OCI-LY7 (cell line): ENCODE measurements at regions of chr6 and their contacts with region 1.

Region 1: DNA sequence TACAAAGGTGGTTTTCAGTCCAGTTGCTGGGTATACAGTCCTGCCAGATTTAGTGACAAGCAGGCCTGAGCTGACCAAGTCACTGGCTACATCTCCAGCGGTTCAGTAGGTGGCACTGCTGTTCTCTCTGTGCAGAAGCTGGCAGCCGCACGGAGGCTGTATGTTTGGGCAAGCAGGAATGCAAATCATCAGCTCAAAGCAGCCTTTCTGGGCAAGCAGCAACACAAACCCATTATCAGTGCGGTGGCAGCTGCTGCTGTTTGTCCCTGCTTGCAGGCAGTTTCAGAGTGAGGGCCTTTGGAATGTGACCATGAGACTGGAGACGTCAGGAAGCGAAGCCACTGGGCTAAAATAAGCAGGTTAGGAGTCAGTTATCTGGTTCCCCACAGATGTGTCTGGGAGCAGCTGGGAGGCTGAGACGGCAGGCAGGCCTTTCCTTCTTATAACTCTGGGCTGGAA is 72.5 kb downstream of the TXLNB start:
- DNase-seq: peak; percentile 96
- H3K4me3 ChIP-seq: peak overlapping the region; percentile 60
- H3K27ac ChIP-seq: peak overlapping the region; percentile 63
- H3K4me1 ChIP-seq: peaks cover 26% of the 10 kb centered on the region
- CTCF ChIP-seq: peak; percentile 98

Region 2: DNA sequence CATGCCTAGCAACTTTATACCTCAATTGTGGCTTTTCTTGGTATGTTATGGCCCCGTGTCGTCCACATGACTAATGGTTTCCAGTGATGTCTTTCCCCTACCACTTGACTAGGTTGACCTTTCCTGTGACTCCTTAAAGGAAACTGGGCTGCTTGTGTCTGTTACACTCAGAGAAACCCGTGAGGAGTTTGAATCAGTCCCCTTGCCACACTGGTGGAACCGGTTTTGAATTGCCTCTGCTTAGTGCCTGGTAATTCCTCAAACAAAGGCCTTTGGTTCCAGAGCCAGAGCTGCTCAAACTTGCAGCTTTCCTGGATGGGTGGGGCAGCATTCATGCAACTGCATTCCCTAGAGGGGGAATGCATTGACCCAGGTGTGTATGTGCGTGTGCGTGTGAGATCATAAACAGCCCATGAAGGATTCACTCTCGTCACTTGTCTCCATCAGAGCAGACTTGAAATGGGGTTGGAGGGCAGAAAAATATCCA is 401.4 kb before region 1 on chr6:
- CTCF ChIA-PET with region 1: no interaction called
- POLR2A ChIA-PET with region 1: no interaction called
- intact Hi-C with region 1: loop called (anchors 2 kb)
- DNase-seq: no peak
- H3K4me3 ChIP-seq: no peak overlapping the region
- H3K27ac ChIP-seq: no peak overlapping the region
- H3K4me1 ChIP-seq: peaks cover 15% of the 10 kb centered on the region
- CTCF ChIP-seq: no peak

Region 3: GRCh38 chr6:139060332-139060731 is 159.0 kb before region 1 on chr6:
- CTCF ChIA-PET with region 1: no interaction called
- POLR2A ChIA-PET with region 1: no interaction called
- intact Hi-C with region 1: no loop called
- DNase-seq: no peak
- H3K4me3 ChIP-seq: no peak overlapping the region
- H3K27ac ChIP-seq: no peak overlapping the region
- H3K4me1 ChIP-seq: no peaks in the 10 kb centered on the region
- CTCF ChIP-seq: no peak

Region 4: GRCh38 chr6:139124887-139125672 is 94.2 kb before region 1 on chr6:
- CTCF ChIA-PET with region 1: interaction called, 5 read pairs
- POLR2A ChIA-PET with region 1: interaction called, 3 read pairs
- intact Hi-C with region 1: loop called (anchors 1 kb)
- DNase-seq: peak; percentile 92
- H3K4me3 ChIP-seq: peak overlapping the region; percentile 19
- H3K27ac ChIP-seq: peak overlapping the region; percentile 21
- H3K4me1 ChIP-seq: peaks cover 21% of the 10 kb centered on the region
- CTCF ChIP-seq: peak; percentile 98

Region 5: GRCh38 chr6:139230391-139230840 is 11.1 kb after region 1 on chr6:
- CTCF ChIA-PET with region 1: interaction called, 10 read pairs
- POLR2A ChIA-PET with region 1: interaction called, 7 read pairs
- intact Hi-C with region 1: no loop called
- DNase-seq: peak; percentile 77
- H3K4me3 ChIP-seq: no peak overlapping the region
- H3K27ac ChIP-seq: peak overlapping the region; percentile 47
- H3K4me1 ChIP-seq: peaks cover 26% of the 10 kb centered on the region
- CTCF ChIP-seq: peak; percentile 74

Region 6: GRCh38 chr6:139256087-139256486 is 36.8 kb after region 1 on chr6:
- CTCF ChIA-PET with region 1: interaction called, 4 read pairs
- POLR2A ChIA-PET with region 1: interaction called, 15 read pairs
- intact Hi-C with region 1: no loop called
- DNase-seq: no peak
- H3K4me3 ChIP-seq: no peak overlapping the region
- H3K27ac ChIP-seq: no peak overlapping the region
- H3K4me1 ChIP-seq: peaks cover 12% of the 10 kb centered on the region
- CTCF ChIP-seq: no peak